Sciatic nerve (tissue), 2 donors: ENCODE measurements at regions of chr2 and their contacts with region 1.

Region 1: DNA sequence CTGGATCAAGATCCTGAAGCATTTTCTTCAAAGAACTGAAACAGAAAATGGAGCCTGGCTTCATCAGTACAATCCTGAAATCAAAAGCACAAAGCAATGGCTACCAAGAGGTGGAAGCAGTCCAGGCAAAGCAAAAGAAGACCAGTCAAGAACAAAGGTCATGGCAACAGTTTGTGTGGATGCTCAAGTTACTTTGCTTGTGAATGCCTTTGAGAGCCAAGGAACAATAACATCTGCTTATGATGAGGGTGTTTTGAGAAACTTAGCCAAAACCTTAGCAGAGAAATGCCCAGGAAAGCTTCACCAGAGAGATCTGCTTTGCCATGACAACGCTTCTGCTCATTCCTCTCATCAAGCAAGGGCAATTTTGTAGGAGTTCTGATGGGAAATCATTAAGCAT is 723.1 kb downstream of the TMEM182 start:
- DNase-seq: no peak
- ATAC-seq: no peak

Region 2: GRCh38 chr2:102050854-102051391 is 1434.0 kb before region 1 on chr2:
- intact Hi-C with region 1: no loop called
- DNase-seq: peak; percentile 91
- ATAC-seq: peak; percentile 85

Region 3: DNA sequence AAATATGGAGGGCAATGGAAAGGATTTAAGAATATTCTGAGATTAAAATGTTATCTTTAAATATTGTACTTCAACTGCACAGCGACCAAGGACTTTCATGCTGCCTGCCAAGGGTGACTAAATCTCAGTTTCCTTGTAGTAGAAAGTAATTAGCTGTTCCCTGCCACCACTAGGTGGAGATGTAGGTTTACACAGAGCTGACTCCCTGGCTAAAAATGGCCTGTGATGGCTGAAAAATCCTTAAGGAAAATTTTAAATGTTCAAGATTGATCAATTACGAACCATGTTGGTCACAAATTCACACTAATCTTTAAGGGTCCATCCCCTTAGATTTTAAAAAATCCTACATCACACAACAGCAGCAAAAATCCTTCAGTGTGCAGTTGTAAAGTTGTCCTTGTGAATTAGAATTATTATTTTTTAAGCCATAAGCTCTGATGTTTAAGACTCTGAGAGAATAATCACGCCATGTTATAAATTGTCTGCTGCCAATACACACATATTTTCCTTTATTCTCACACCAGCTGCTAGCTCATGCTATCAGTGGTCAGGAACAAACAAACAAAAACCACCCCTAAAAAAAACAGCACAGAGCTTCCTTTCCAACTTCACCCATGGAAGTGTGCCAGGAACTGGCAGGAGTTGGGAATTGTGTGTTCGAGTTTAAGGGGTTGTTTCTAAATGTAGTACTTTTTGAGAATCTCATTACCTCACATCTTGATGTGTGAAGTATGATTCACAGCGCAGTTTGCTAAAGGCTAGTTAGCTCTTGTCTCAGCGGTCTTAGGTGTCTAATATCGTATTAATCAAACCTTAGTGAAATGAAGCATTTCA is 323.2 kb before region 1 on chr2:
- intact Hi-C with region 1: no loop called
- DNase-seq: no peak
- ATAC-seq: peak; percentile 58

Region 4: DNA sequence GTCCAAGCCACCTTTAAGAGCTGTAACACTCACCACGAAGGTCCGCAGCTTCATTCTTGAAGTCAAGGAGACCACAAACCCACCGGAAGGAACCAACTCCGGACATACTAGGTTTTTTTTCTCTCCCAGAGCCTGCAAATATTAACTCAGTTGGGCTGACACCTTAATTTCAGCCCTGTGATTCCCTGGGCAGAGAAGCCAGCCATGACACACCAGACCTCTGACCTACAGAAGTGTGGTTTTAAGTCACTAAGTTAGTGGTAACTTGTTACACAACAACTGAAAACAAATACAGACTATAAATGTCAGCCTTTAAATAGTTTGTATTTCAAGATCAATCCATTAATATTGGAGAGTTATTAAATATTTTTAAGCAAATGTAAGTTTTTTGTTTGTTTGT is 132.0 kb after region 1 on chr2:
- intact Hi-C with region 1: no loop called
- DNase-seq: no peak
- ATAC-seq: no peak

Region 5: GRCh38 chr2:103638978-103639377 is 154.1 kb after region 1 on chr2:
- intact Hi-C with region 1: loop called (anchors 5 kb)
- DNase-seq: no peak
- ATAC-seq: no peak

Region 6: GRCh38 chr2:104033399-104033798 is 548.5 kb after region 1 on chr2:
- intact Hi-C with region 1: no loop called
- DNase-seq: no peak
- ATAC-seq: no peak